Common myeloid progenitor, CD34-positive (primary cell): ENCODE measurements at regions of chr2 and their contacts with region 1.

Region 1: DNA sequence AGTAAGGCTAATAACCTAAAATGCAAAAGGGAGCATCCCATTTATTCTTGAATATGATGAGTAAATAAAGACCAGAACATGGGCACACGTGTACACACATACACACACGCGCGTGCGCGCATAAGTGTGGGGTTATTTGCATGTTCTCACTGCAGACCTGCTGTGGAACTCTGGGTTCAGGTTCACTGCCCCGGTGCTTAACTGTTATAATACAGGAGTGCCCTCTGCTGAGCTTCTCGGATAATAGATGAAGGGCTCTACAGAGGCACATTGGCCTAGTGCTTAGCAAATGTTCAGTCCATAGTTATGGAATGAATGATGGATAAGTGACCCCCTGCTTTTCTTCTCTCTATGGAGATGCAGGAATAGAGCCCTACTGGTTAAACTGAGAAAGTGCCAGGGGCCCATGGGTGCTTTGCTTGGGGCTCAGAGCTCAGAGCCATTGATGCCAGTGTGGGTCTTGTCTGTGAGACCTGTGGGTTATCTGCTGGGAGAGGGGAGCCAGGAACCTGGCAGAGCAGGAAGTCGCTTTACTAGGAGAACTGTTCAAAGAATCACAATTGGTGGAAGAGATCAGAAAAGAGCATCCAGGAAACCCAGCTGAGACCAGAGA is 3.6 kb upstream of the ARL4C start:
- DNase-seq: peak; percentile 67 to 77 (median 73)
- H3K4me3 ChIP-seq: no peak overlapping the region
- H3K27ac ChIP-seq: no peak overlapping the region
- H3K4me1 ChIP-seq: peaks cover 0 to 15% (median 10%) of the 10 kb centered on the region in 4 experiments
- H3K27me3 ChIP-seq: peaks cover 0 to 30% (median 13%) of the 10 kb centered on the region in 5 experiments

Region 2: DNA sequence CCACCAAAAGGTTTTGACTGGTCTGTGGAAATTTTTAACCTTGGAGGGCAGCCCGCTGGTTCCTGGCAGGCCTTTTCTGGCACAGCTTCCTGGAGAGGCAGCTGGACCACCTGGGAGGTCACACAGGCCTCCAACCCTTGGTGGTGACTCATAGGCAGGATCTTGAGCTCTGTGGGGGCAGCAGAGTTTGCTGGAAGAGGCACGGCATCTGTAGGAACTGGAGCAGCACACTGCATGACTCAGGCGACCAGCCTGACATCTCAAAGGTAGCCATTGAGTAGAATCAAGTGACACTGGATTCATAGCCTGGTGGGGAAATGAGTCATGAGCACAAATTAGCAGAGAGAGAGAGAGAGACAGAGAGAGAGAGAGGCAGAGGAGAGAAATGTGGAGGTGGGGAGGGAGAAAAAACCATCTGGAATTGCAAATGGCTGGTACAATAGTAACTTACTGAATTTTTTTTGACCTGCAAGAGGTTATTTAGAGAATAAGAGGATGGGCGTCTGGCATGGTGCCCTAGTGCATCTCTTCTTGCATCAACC is 525.9 kb before region 1 on chr2:
- CTCF ChIA-PET with region 1: interaction called, 10 read pairs
- POLR2A ChIA-PET with region 1: no interaction called
- DNase-seq: peak in 2 of 3 donors; percentile 16 to 36
- H3K4me3 ChIP-seq: no peak overlapping the region
- H3K27ac ChIP-seq: no peak overlapping the region
- H3K4me1 ChIP-seq: no peaks in the 10 kb centered on the region
- H3K27me3 ChIP-seq: peaks cover 0 to 30% (median 13%) of the 10 kb centered on the region in 5 experiments

Region 3: GRCh38 chr2:234288974-234289455 is 211.5 kb before region 1 on chr2:
- CTCF ChIA-PET with region 1: interaction called, 18 read pairs
- POLR2A ChIA-PET with region 1: interaction called, 6 read pairs
- DNase-seq: peak; percentile 46 to 74 (median 72)
- H3K4me3 ChIP-seq: no peak overlapping the region
- H3K27ac ChIP-seq: no peak overlapping the region
- H3K4me1 ChIP-seq: peaks cover 11 to 42% (median 31%) of the 10 kb centered on the region in 4 experiments
- H3K27me3 ChIP-seq: no peaks in the 10 kb centered on the region